Colonic mucosa (tissue), 4 donors: ENCODE measurements at regions of chr11 and their contacts with region 1.

Region 1: DNA sequence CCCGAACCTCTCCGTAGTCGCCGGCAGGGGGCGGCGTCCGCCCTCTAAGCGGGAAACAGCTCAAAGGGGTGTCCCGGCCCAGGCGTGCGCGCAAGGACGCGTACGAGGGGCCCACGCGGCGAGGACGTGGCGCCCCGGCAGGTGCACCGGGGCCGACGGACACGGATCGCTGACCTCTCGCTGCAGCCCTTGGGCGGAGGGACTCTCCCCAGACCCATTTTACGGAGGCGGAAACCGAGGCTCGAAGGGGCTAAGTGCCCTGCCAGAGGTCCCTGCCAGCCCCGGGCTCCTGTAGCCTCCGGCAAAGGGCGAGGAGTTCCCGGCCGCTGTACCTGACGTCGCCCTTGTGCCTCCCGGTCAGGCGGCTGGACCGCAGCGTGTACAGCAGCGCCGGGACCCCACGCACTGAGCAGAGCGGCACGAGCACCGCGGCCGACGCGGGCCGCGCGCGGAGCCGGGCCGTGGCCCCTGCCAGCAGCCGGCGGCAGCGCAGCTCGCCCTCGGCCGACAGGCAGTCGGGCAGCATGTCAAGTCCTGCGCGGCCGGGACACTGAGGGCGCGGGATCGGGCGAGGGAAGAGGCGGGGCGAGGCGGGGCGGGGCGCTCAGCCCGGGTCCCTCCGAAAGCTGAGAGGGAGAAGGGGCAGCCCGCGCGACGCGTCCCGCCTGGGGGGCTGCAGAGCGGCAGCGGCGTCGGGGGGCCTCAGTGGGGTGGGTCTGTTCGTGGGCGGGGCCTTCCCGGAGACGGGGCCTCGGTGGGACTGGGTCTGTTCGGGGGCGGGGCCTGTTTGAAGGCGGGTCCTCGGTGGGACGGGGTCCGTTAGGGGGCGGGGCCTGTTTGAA is at the start of gene NUDT8:
- DNase-seq: peak; percentile 89
- H3K4me3 ChIP-seq: peak within 1 kb of the TSS; percentile 63
- H3K27ac ChIP-seq: peak within 1 kb of the TSS; percentile 97
- H3K4me1 ChIP-seq: peaks cover 25% of the 10 kb centered on the region
- H3K27me3 ChIP-seq: no peaks in the 10 kb centered on the region
- CTCF ChIP-seq: peak; percentile 92
- total RNA-seq, gene NUDT8: 35.1 to 52.5 TPM

Region 2: DNA sequence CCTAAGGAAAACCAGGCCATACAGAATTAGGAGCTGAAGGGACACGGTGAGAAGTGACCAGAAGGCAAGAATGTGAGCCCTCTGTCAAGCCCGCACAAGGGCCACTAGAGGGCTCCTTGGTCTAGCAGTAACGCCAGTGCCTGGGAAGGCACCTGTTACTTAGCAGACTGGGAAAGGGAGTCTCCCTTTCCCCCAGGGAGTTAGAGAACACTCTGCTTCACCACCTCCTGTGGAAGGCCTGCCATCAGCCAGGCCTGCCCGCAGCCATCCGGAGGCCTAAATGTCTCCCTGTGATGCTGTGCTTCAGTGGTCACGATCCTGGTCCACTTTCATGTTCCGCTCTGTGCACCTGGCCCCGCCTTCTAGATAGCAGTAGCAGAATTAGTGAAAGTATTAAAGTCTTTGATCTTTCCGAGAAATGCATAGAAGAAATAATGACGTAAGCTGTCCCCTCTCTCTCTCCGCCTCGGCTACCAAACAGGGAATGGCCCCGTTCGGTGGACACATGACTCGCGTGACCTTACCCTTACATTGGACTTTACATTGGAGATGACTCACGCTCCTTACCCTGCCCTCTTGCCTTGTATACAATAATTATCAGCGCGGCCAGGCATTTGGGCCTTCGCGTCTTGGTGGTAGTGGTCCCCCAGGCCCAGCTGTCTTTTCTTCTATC is 56.7 kb before region 1 on chr11:
- intact Hi-C with region 1: no loop called
- DNase-seq: peak; percentile 64
- H3K4me3 ChIP-seq: no peak overlapping the region
- H3K27ac ChIP-seq: no peak overlapping the region
- H3K4me1 ChIP-seq: no peaks in the 10 kb centered on the region
- H3K27me3 ChIP-seq: no peaks in the 10 kb centered on the region
- CTCF ChIP-seq: peak; percentile 78

Region 3: GRCh38 chr11:67663923-67664692 is 34.5 kb after region 1 on chr11:
- intact Hi-C with region 1: loop called (anchors 5 kb)
- DNase-seq: no peak
- H3K4me3 ChIP-seq: no peak overlapping the region
- H3K27ac ChIP-seq: no peak overlapping the region
- H3K4me1 ChIP-seq: no peaks in the 10 kb centered on the region
- H3K27me3 ChIP-seq: no peaks in the 10 kb centered on the region
- CTCF ChIP-seq: no peak